CD14-positive monocyte (primary cell): ENCODE measurements at regions of chr9 and their contacts with region 1.

Region 1: GRCh38 chr9:123929870-123930831 is at the start of gene DENND1A:
- DNase-seq: peak; percentile 82 to 87 (median 83)
- H3K4me3 ChIP-seq: peak within 1 kb of the TSS; percentile 61 to 95 (median 69)
- H3K4me3 Mint-ChIP-seq: peak within 1 kb of the TSS; percentile 93 to 95
- H3K27ac ChIP-seq: peak within 1 kb of the TSS; percentile 77 to 86
- H3K27ac Mint-ChIP-seq: peak within 1 kb of the TSS; percentile 84 to 96 (median 92)
- H3K4me1 ChIP-seq: peaks cover 46 to 47% of the 10 kb centered on the region in 2 donors
- H3K4me1 Mint-ChIP-seq: peaks cover 46% of the 10 kb centered on the region
- H3K27me3 ChIP-seq: no peaks in the 10 kb centered on the region
- H3K27me3 Mint-ChIP-seq: peaks cover 4 to 6% (median 6%) of the 10 kb centered on the region in 3 donors
- CTCF ChIP-seq: no peak
- polyA plus RNA-seq, gene DENND1A: 24.8 to 73.0 (median 29.4) TPM

Region 2: GRCh38 chr9:123834889-123835562 is 95.1 kb before region 1 on chr9:
- intact Hi-C with region 1: loop called in 1 of 2 experiments (anchors 10 kb)
- DNase-seq: peak; percentile 50 to 76 (median 66)
- H3K4me3 ChIP-seq: peak overlapping the region in 2 of 3 experiments; percentile 41 to 63
- H3K4me3 Mint-ChIP-seq: peak overlapping the region; percentile 54 to 88
- H3K27ac ChIP-seq: peak overlapping the region in 1 of 2 donors; percentile 75
- H3K27ac Mint-ChIP-seq: peak overlapping the region; percentile 68 to 91 (median 85)
- H3K4me1 ChIP-seq: peaks cover 36 to 41% of the 10 kb centered on the region in 2 donors
- H3K4me1 Mint-ChIP-seq: peaks cover 59% of the 10 kb centered on the region
- H3K27me3 ChIP-seq: no peaks in the 10 kb centered on the region
- H3K27me3 Mint-ChIP-seq: peaks cover 0 to 1% (median 0%) of the 10 kb centered on the region in 3 donors
- CTCF ChIP-seq: no peak

Region 3: DNA sequence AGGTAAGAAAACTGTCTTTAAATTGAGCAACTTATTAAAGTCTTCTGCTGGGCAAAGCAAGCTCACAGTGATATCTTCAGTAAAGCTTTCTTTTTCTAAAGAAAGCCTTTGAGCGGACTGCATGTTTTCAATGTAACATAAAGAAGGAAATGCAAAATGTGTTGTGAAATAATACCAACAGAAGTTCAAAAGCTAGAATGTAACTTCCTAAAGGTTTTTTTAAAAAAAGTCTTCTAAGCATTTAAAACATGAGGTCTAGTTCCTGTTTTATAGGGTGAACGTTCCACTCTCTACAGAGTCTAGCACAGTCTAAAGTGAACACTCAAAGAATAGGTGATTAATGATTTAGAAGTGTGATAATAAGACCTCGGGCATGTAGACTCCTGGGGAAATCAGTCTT is 63.1 kb before region 1 on chr9:
- intact Hi-C with region 1: loop called (anchors 5 kb)
- DNase-seq: peak; percentile 61 to 90 (median 79)
- H3K4me3 ChIP-seq: peak overlapping the region in 2 of 3 experiments; percentile 16 to 60
- H3K4me3 Mint-ChIP-seq: peak overlapping the region in 1 of 2 donors; percentile 73
- H3K27ac ChIP-seq: peak overlapping the region; percentile 78 to 80
- H3K27ac Mint-ChIP-seq: peak overlapping the region; percentile 88 to 97 (median 92)
- H3K4me1 ChIP-seq: peaks cover 66 to 77% of the 10 kb centered on the region in 2 donors
- H3K4me1 Mint-ChIP-seq: peaks cover 83% of the 10 kb centered on the region
- H3K27me3 ChIP-seq: no peaks in the 10 kb centered on the region
- H3K27me3 Mint-ChIP-seq: peaks cover 0 to 2% (median 0%) of the 10 kb centered on the region in 3 donors
- CTCF ChIP-seq: no peak

Region 4: DNA sequence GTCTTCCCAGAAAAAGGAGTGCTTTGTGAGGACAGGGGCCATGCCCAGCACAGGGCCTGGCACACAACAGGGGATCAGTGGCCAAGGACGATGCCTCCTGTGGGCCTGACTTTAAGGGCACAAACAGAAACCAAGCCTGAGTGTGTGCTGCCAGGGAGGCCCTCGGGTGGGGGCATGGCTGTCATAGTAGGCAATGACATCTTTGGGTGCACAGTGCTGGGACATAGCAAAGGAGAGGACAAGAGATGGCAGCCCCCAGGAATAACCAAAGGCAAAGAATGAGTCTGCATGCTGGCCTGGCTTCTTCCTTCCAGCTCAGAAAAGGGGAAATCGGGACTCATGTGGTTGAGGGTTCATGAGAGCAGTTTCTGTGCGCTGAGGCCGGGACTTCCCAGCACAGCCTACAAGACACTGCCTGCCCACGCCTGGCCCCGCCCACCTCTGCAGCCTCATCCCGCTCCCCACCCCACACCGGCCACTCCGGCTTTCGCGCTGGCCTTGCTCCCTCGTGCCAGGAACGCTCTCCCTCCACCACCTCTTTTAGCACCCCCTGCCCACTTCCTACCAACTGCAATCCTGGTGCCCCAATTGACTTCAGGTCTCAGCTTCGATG is 67.6 kb after region 1 on chr9:
- intact Hi-C with region 1: loop called in 1 of 2 experiments (anchors 5 kb)
- DNase-seq: peak; percentile 72 to 97 (median 73)
- H3K4me3 ChIP-seq: peak overlapping the region in 1 of 3 experiments; percentile 58
- H3K4me3 Mint-ChIP-seq: peak overlapping the region; percentile 53 to 98
- H3K27ac ChIP-seq: peak overlapping the region; percentile 37 to 43
- H3K27ac Mint-ChIP-seq: peak overlapping the region in 4 of 7 donors; percentile 62 to 84 (median 70)
- H3K4me1 ChIP-seq: peaks cover 32 to 37% of the 10 kb centered on the region in 2 donors
- H3K4me1 Mint-ChIP-seq: peaks cover 49% of the 10 kb centered on the region
- H3K27me3 ChIP-seq: peaks cover 60 to 65% of the 10 kb centered on the region in 2 donors
- H3K27me3 Mint-ChIP-seq: peaks cover 80 to 85% (median 83%) of the 10 kb centered on the region in 3 donors
- CTCF ChIP-seq: no peak

Region 5: DNA sequence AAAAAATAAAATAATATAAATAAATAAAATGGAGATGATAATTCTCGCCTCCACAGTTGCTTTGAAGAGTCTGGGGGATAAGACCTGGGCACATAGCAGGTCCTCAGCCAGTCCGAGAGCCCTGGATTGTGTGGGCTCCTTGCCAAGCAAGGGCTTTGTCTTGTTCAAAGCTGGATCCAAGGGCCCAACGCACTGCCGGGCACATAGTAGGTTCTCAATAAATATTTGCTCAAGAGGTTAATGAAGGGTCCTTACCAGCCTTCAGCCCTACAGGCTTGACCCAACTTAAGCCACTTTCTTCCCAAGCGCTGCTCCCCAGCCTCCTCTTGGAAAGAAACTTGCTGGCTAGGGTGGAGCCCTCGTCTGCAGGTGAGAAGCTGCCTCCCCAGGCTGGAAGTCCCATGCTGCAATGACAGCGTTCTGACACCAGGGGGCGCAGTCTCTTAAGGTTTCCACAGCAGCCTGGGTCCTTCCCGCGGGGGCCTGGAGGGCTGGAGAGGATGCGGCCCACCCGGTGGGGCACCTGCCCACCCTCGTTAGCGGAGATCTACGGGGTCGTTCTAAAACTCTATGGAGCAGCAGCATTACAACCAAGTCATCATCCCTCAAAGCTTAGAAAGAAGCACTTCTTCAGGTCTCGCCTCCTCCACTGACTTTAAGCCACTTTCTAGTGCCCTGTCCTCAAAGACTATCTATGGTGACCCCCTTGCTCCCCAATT is 196.6 kb after region 1 on chr9:
- intact Hi-C with region 1: no loop called
- DNase-seq: peak; percentile 55 to 71 (median 71)
- H3K4me3 ChIP-seq: no peak overlapping the region
- H3K4me3 Mint-ChIP-seq: no peak overlapping the region
- H3K27ac ChIP-seq: no peak overlapping the region
- H3K27ac Mint-ChIP-seq: no peak overlapping the region
- H3K4me1 ChIP-seq: no peaks in the 10 kb centered on the region
- H3K4me1 Mint-ChIP-seq: peaks cover 10% of the 10 kb centered on the region
- H3K27me3 ChIP-seq: no peaks in the 10 kb centered on the region
- H3K27me3 Mint-ChIP-seq: peaks cover 3 to 7% (median 5%) of the 10 kb centered on the region in 3 donors
- CTCF ChIP-seq: peak; percentile 99